Mammary epithelial cell (primary cell): ENCODE measurements at regions of chr12 and their contacts with region 1.

Region 1: DNA sequence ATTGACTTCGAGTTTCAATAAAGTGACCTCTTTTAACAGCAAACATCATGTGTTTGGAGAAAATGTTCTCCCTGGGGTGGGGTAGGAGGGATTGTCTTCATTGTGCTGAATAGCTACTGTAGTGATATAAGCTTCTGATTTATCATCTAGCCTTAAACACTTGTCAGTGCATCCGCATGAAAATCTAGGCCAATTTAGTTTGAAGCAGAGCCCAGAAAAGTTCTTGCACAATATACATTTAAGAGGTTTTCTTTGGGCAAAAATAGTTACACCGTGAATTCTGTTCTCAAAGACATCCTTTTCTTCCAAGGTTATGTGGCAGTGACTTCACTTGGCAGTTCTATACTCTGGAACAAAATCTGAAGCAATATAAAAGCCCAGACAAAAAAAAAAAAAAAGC is 136.0 kb upstream of the IFNG-AS1 start:
- DNase-seq: no peak
- H3K4me3 ChIP-seq: no peak overlapping the region
- H3K27ac ChIP-seq: no peak overlapping the region
- H3K4me1 ChIP-seq: peaks cover 4% of the 10 kb centered on the region
- H3K27me3 ChIP-seq: no peaks in the 10 kb centered on the region
- CTCF ChIP-seq: no peak

Region 2: DNA sequence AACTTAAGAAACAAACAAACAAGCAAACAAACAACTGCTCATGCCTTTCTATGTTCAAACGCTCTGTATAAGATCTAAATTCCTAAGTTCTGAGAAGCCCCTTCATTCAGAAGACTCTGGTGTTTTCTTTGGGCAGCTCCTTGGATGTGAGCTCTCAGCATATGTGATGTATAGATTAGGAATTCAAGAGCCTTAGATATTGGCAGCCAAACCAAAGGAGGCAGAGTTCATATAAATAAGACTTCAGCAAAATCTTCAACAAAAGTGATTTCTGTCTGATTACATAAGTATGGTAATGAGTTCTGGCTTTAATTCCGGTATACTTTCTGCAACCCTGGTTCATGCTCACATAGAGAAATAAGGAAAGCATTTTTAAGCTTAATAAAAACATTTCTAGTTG is 59.0 kb before region 1 on chr12:
- CTCF ChIA-PET with region 1: no interaction called
- dilution Hi-C with region 1: loop called (anchors 5 kb)
- in situ Hi-C with region 1: no loop called
- intact Hi-C with region 1: no loop called
- DNase-seq: no peak
- H3K4me3 ChIP-seq: no peak overlapping the region
- H3K27ac ChIP-seq: no peak overlapping the region
- H3K4me1 ChIP-seq: no peaks in the 10 kb centered on the region
- H3K27me3 ChIP-seq: no peaks in the 10 kb centered on the region
- CTCF ChIP-seq: no peak